H1 (cell line): ENCODE measurements at regions of chr5 and their contacts with region 1.

Region 1: GRCh38 chr5:139787568-139788293 is 7.9 kb upstream of the PSD2 start:
- DNase-seq: peak in 1 of 2 experiments; percentile 100
- H3K4me3 ChIP-seq: peak overlapping the region; percentile 39 to 82 (median 66)
- H3K27ac ChIP-seq: no peak overlapping the region
- H3K4me1 ChIP-seq: peaks cover 0 to 5% (median 5%) of the 10 kb centered on the region in 4 experiments; a peak in 5 of 7 replicates
- H3K27me3 ChIP-seq: peaks cover 0 to 22% (median 16%) of the 10 kb centered on the region in 4 experiments; a peak in 5 of 7 replicates
- CTCF ChIP-seq: peak in 2 of 3 experiments; percentile 95 to 98; a peak in 3 of 4 replicates
- EP300 ChIP-seq: no peak
- POLR2A ChIP-seq: no peak
- RAD21 ChIP-seq: peak; percentile 96 to 99

Region 2: DNA sequence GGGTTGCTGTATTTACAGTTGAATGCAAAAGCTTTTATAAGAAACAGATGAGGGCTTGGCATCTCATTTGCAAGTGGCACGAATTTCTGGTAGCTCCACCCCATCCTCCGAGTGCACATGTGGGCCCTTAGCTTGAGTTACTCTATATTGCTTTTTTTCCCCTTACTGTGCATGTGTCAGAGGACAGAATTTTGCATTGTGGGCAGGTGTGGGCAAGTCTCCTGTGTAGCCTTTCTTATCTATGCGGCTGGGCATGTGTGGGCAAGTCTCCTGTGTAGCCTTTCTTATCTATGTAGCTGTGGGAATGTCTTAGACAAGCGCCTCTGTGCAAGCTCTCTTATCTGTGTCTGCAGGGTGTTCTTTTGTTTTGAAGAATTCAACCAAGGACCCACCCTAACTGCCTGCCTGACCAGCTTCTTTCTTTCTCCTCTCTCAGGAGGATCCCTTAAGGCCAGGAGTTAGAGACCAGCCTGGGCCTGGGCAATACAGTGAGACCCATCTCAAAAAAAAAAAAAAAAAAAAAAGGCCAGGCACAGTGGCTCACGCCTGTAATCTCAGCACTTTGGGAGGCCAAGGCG is 555.5 kb before region 1 on chr5:
- CTCF ChIA-PET with region 1: no interaction called
- POLR2A ChIA-PET with region 1: no interaction called
- DNase-seq: no peak
- H3K4me3 ChIP-seq: no peak overlapping the region
- H3K27ac ChIP-seq: no peak overlapping the region
- H3K4me1 ChIP-seq: no peaks in the 10 kb centered on the region
- H3K27me3 ChIP-seq: no peaks in the 10 kb centered on the region
- CTCF ChIP-seq: no peak
- EP300 ChIP-seq: no peak
- POLR2A ChIP-seq: no peak
- RAD21 ChIP-seq: no peak

Region 3: DNA sequence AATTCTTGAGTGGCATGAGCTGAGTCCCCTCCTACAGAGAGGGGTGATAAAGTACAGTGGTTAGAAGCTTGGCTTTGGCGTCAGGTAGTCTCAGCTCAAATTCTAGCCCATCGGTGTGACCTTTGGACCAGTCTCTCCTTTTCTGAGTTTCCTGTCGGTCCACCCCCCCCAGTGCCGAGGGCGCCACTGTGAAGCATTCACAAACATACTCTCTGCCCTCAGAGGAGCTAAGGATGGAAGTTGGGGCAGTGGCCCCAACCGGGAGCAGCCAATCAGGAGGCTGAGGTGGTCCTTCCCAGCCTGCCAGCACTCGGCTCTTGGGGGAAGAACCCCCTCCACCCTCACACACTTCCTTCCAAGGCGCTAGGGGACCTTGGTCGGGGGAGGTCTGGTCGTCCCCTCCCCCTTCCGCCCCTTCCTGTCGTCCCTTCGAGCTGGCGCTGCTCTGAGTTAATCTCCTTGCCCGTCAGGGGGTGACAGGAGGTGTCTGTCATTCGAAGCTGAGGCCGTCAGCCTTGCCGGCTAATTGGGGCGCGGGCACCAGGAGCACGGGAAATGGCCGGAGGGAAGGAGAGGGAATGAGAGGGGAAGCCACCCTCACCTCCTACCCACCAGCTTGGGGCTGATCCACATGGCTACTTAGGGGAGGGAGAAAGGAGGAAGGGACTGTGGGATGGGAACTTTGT is 86.5 kb before region 1 on chr5:
- CTCF ChIA-PET with region 1: no interaction called
- POLR2A ChIA-PET with region 1: no interaction called
- DNase-seq: peak in 1 of 2 experiments; percentile 79
- H3K4me3 ChIP-seq: peak overlapping the region in 2 of 4 experiments; percentile 30 to 37; a peak in 3 of 8 replicates
- H3K27ac ChIP-seq: no peak overlapping the region
- H3K4me1 ChIP-seq: peaks cover 21 to 47% (median 37%) of the 10 kb centered on the region in 4 experiments
- H3K27me3 ChIP-seq: peaks cover 0 to 3% (median under 1%) of the 10 kb centered on the region in 4 experiments; a peak in 4 of 7 replicates
- CTCF ChIP-seq: no peak
- EP300 ChIP-seq: no peak
- POLR2A ChIP-seq: no peak
- RAD21 ChIP-seq: peak in 1 of 2 experiments; percentile 13; a peak in 1 of 4 replicates

Region 4: GRCh38 chr5:139774980-139775661 is 12.6 kb before region 1 on chr5:
- CTCF ChIA-PET with region 1: interaction called, 145 read pairs
- POLR2A ChIA-PET with region 1: interaction called, 4 read pairs
- DNase-seq: peak; percentile 63 to 100
- H3K4me3 ChIP-seq: peak overlapping the region in 1 of 4 experiments; percentile 28; a peak in 1 of 8 replicates
- H3K27ac ChIP-seq: no peak overlapping the region
- H3K4me1 ChIP-seq: peaks cover 0 to 5% (median 4%) of the 10 kb centered on the region in 4 experiments; a peak in 4 of 7 replicates
- H3K27me3 ChIP-seq: peaks cover 0 to 5% (median 2%) of the 10 kb centered on the region in 4 experiments; a peak in 3 of 7 replicates
- CTCF ChIP-seq: peak in 2 of 3 experiments; percentile 96 to 97; a peak in 3 of 4 replicates
- EP300 ChIP-seq: no peak
- POLR2A ChIP-seq: no peak
- RAD21 ChIP-seq: peak; percentile 61 to 73

Region 5: GRCh38 chr5:139814675-139815280 is 27.0 kb after region 1 on chr5:
- CTCF ChIA-PET with region 1: interaction called, 68 read pairs
- POLR2A ChIA-PET with region 1: no interaction called
- DNase-seq: no peak
- H3K4me3 ChIP-seq: no peak overlapping the region
- H3K27ac ChIP-seq: no peak overlapping the region
- H3K4me1 ChIP-seq: no peaks in the 10 kb centered on the region
- H3K27me3 ChIP-seq: peaks cover 0 to 2% (median 0%) of the 10 kb centered on the region in 4 experiments; a peak in 1 of 7 replicates
- CTCF ChIP-seq: no peak
- EP300 ChIP-seq: no peak
- POLR2A ChIP-seq: no peak
- RAD21 ChIP-seq: no peak

Region 6: DNA sequence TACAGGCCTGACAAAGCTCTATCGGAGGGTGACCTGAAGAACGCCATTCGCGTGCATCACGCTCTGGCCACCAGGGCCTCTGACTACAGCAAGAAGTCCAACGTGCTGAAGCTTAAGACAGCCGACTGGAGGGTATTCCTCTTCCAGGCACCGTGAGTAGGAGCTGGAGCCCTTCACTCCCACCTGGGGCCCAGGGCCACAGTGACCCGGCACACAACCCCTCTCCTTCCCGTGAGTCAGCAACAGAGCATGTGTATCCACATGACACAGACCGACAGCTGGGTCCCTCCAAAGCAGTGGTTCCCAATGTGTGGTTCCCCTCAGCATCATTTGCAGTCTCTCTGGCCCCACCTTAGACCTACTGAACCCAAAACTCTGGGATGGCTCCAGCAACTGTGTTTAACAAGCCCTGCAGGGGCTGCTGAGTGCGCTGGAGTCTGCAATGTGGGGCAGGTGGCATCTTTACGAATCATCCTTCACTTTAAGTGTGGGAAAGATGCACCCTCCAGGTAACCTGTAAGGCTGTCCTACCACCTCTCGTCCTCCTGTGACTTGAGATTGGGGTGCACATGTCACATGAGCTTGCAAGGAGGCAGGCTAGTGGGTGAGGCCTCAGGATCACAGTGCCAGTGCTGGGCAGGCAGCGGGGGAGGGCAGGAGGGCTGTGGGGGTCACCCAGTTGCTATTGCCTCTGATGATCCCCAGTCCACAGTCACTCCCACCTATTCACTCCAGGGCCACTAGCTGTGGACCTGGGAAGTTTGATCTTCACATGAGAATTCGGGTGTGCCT is 50.1 kb after region 1 on chr5:
- CTCF ChIA-PET with region 1: interaction called, 113 read pairs
- POLR2A ChIA-PET with region 1: no interaction called
- DNase-seq: no peak
- H3K4me3 ChIP-seq: no peak overlapping the region
- H3K27ac ChIP-seq: no peak overlapping the region
- H3K4me1 ChIP-seq: no peaks in the 10 kb centered on the region
- H3K27me3 ChIP-seq: peaks cover 0 to 4% (median 0%) of the 10 kb centered on the region in 4 experiments; a peak in 2 of 7 replicates
- CTCF ChIP-seq: peak in 1 of 3 experiments; percentile 8; a peak in 1 of 4 replicates
- EP300 ChIP-seq: no peak
- POLR2A ChIP-seq: no peak
- RAD21 ChIP-seq: no peak

Region 7: GRCh38 chr5:139856714-139857113 is 69.0 kb after region 1 on chr5:
- CTCF ChIA-PET with region 1: interaction called, 120 read pairs
- POLR2A ChIA-PET with region 1: no interaction called
- DNase-seq: no peak
- H3K4me3 ChIP-seq: no peak overlapping the region
- H3K27ac ChIP-seq: no peak overlapping the region
- H3K4me1 ChIP-seq: no peaks in the 10 kb centered on the region
- H3K27me3 ChIP-seq: peaks cover 0 to 7% (median 0%) of the 10 kb centered on the region in 4 experiments; a peak in 2 of 7 replicates
- CTCF ChIP-seq: no peak
- EP300 ChIP-seq: no peak
- POLR2A ChIP-seq: no peak
- RAD21 ChIP-seq: no peak

Region 8: DNA sequence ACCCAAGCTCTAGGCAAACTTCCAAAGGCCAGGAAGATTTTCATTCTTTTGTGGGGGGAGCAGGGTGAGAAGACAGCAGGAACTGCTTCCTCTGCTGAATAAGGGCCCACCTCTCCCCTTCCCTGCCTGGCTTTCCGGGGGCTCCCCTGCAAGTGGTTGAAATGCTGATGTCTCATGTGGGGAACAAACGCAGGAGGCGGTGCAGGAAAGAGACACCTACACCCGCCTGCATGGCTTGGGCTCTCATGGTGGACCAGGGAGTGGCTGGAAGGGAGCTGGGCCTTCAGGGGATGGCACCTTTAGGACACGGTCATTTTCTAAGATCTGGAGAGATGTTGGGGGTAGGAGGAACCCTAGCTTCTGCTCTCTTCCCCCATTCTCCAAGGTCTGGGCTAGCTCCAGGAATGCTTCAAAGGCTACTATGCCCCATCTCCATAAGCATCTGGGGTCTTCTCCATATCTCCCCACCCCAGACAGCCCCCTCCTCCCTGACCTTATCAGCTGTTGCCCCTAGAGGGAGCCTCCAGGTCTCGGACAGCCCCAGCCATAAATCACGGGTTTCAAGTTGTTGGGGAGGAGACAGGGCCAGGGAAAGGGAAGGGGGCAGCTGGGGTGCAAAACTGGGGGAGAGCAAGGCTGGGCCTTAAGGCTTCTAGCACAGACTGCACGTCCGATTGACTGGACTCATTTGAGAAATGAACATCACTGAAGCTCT is 84.5 kb after region 1 on chr5:
- CTCF ChIA-PET with region 1: interaction called, 19 read pairs
- POLR2A ChIA-PET with region 1: no interaction called
- DNase-seq: no peak
- H3K4me3 ChIP-seq: no peak overlapping the region
- H3K27ac ChIP-seq: no peak overlapping the region
- H3K4me1 ChIP-seq: peaks cover 0 to 9% (median 5%) of the 10 kb centered on the region in 4 experiments; a peak in 6 of 7 replicates
- H3K27me3 ChIP-seq: peaks cover 0 to 2% (median 0%) of the 10 kb centered on the region in 4 experiments; a peak in 2 of 7 replicates
- CTCF ChIP-seq: peak; percentile 64 to 73 (median 67)
- EP300 ChIP-seq: no peak
- POLR2A ChIP-seq: no peak
- RAD21 ChIP-seq: peak; percentile 51 to 64

Region 9: GRCh38 chr5:140157032-140157803 is 369.5 kb after region 1 on chr5:
- CTCF ChIA-PET with region 1: interaction called, 21 read pairs
- POLR2A ChIA-PET with region 1: no interaction called
- DNase-seq: peak in 1 of 2 experiments; percentile 96
- H3K4me3 ChIP-seq: peak overlapping the region in 3 of 4 experiments; percentile 19 to 52 (median 26); a peak in 6 of 8 replicates
- H3K27ac ChIP-seq: no peak overlapping the region
- H3K4me1 ChIP-seq: peaks cover 6 to 19% (median 14%) of the 10 kb centered on the region in 4 experiments
- H3K27me3 ChIP-seq: peaks cover 0 to 8% (median 6%) of the 10 kb centered on the region in 4 experiments; a peak in 4 of 7 replicates
- CTCF ChIP-seq: peak; percentile 89 to 96 (median 89)
- EP300 ChIP-seq: no peak; a peak in 1 of 3 replicates
- POLR2A ChIP-seq: no peak
- RAD21 ChIP-seq: peak; percentile 96 to 98